ENCODE measurements at regions of chr2 and their contacts with region 1.

Region 1: DNA sequence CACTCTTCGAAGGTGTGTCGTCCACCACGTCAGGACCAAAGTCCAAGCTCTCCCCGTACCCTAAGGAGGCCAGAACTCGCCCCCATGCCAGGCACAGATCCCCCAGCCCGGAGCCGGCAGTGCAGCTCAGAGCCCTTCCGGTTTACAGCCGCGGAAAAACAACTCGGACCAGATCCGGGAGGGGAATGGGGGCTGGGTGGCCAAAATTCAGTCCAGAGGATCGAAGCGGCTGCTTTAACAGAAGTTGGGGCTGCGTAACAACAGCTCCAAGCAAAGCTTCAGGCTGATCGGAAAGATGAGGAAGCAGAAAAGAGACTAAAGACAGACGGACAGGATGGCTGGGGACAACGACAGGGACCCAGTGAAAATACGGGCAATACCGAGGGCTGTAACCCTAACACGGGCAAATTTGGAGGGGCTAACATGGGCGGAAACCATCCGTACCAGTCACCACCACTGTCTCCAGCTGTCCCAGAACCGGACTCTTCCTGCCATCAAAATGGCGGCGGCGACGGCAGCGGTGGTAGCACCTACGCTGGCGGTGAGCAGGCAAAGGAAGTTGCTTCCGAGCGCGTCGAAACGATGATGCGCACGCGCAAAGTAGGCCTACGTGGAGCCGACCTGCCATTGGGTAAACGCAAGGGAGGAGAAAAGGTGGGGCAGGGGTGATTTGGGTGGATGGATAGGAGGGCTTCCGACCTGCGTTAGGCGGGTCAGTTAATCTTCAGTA is at the start of gene MMADHC:
- DNase-seq: peak; percentile 97
- H3K4me3 ChIP-seq: peak within 1 kb of the TSS; percentile 60
- H3K4me3 Mint-ChIP-seq: peak within 1 kb of the TSS; percentile 90
- H3K27ac Mint-ChIP-seq: peak within 1 kb of the TSS; percentile 98
- H3K4me1 ChIP-seq: peaks cover 10% of the 10 kb centered on the region; the same call in 1 of the 2 replicates
- H3K4me1 Mint-ChIP-seq: peaks cover 21% of the 10 kb centered on the region
- H3K27me3 ChIP-seq: no peaks in the 10 kb centered on the region
- H3K27me3 Mint-ChIP-seq: no peaks in the 10 kb centered on the region
- CTCF ChIP-seq: no peak
- total RNA-seq, gene MMADHC: 125 and 132 TPM in 2 replicates

Region 2: DNA sequence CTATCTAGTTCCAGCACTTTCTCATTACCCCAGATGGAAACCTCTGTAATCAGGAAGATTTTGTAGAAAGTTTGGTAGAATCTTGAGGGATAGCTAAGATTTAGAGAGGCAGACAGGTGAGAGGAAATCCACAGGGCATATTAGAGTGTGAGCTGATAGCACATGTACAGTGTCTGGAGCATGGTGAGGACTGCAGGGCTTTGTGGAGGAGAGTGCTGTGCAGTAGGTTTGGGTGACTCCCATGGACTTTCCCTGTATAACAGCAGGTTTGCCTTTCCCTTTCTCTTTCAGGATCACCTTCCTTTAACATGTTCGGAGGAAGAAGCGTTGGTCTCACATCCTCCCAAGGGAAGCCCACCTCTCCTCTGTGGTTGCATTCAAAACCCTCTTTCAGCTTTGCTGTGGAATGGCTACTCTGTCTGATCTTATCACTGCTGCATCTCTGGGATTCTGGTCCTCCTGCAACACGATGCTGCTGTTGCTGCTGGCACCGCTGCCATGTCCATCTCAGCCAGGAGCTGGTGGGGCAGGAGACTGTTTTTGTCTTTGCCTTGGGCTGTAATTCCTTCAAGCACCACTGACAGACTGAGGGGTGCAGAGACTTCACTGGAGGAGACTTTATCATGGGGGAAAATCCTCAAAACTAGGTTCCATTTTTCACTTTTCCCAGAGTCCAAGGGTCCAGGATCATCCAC is 720.2 kb before region 1 on chr2:
- CTCF ChIA-PET with region 1: no interaction called
- POLR2A ChIA-PET with region 1: no interaction called
- intact Hi-C with region 1: no loop called
- DNase-seq: no peak
- H3K4me3 ChIP-seq: no peak overlapping the region
- H3K4me3 Mint-ChIP-seq: no peak overlapping the region
- H3K27ac Mint-ChIP-seq: no peak overlapping the region
- H3K4me1 ChIP-seq: no peaks in the 10 kb centered on the region
- H3K4me1 Mint-ChIP-seq: no peaks in the 10 kb centered on the region
- H3K27me3 ChIP-seq: peaks cover 1% of the 10 kb centered on the region; the same call in 1 of the 2 replicates
- H3K27me3 Mint-ChIP-seq: peaks cover 24% of the 10 kb centered on the region
- CTCF ChIP-seq: no peak

Region 3: GRCh38 chr2:149346272-149346671 is 241.1 kb before region 1 on chr2:
- CTCF ChIA-PET with region 1: no interaction called
- POLR2A ChIA-PET with region 1: no interaction called
- intact Hi-C with region 1: no loop called
- DNase-seq: no peak
- H3K4me3 ChIP-seq: no peak overlapping the region
- H3K4me3 Mint-ChIP-seq: no peak overlapping the region
- H3K27ac Mint-ChIP-seq: no peak overlapping the region
- H3K4me1 ChIP-seq: no peaks in the 10 kb centered on the region
- H3K4me1 Mint-ChIP-seq: no peaks in the 10 kb centered on the region
- H3K27me3 ChIP-seq: no peaks in the 10 kb centered on the region
- H3K27me3 Mint-ChIP-seq: no peaks in the 10 kb centered on the region
- CTCF ChIP-seq: no peak

Region 4: DNA sequence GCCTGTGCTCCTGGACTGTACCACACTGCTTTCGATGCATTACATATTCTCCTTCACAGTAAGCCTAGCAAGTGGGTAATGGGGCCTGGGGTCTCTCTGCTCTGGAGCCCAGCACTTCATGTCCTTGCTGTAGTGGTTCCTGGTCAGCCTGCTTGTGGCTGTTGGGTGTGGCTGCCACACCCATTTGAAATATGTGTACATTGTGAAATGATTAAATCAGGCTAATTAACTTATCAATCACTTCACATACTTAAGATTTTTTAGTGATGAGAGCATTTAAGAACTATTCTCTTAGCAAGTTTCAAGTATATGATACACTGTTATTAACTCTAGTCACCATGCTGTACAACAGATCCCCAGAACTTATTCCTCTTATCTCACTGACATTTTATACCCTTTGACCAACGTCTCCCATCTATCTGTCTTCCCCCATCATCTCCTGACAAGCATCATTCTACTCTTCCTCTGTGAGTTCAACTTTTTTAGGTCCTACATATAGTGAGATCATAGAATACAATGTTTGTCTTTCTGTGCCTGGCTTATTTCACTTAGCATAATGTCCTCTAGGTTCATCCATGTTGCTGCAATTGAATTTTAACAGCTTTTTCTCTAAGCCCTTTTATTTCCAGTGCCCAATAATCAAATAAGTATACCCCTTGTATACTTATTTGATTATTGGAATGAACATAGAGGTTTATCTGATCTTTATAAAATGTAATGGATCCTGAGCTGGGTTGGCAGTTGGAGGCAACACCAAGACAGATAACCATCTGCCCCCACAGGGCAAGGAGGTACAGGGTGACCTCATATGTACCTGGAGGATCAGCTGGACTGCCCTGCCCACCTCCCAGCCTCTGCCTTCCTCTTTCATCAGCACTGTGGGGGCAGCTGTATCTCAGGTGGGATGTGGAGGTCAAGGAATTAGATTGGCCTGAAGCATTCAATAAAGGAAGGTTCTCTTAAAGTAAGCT is 164.8 kb before region 1 on chr2:
- CTCF ChIA-PET with region 1: no interaction called
- POLR2A ChIA-PET with region 1: interaction called, 13 read pairs
- intact Hi-C with region 1: no loop called
- DNase-seq: peak; percentile 56 to 83
- H3K4me3 ChIP-seq: no peak overlapping the region
- H3K4me3 Mint-ChIP-seq: peak overlapping the region; percentile 2
- H3K27ac Mint-ChIP-seq: peak overlapping the region; percentile 71
- H3K4me1 ChIP-seq: peaks cover 56% of the 10 kb centered on the region
- H3K4me1 Mint-ChIP-seq: peaks cover 41% of the 10 kb centered on the region
- H3K27me3 ChIP-seq: no peaks in the 10 kb centered on the region
- H3K27me3 Mint-ChIP-seq: no peaks in the 10 kb centered on the region
- CTCF ChIP-seq: no peak

Region 5: DNA sequence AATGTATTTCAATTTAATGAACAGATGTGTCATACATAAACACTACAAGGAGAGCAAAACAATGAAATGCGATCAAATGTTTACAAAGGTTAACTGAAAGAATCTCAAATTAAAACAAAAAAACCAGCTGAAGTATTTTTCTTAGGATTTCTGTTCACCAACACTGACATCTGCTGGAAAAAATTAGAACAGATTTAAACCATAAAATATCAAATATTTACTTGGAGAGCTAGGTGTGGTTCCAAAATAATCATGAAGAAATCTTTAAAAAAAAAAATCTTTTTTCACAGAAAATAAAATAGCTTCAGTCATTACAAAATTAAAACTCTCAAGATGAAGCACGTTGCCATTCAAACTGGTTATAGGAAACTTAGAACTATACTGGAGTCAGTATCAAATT is 13.6 kb before region 1 on chr2:
- CTCF ChIA-PET with region 1: interaction called, 4 read pairs
- POLR2A ChIA-PET with region 1: interaction called, 15 read pairs
- intact Hi-C with region 1: loop called (anchors 2 kb)
- DNase-seq: no peak
- H3K4me3 ChIP-seq: no peak overlapping the region
- H3K4me3 Mint-ChIP-seq: no peak overlapping the region
- H3K27ac Mint-ChIP-seq: no peak overlapping the region
- H3K4me1 ChIP-seq: peaks cover 15% of the 10 kb centered on the region; the same call in 1 of the 2 replicates
- H3K4me1 Mint-ChIP-seq: peaks cover 14% of the 10 kb centered on the region
- H3K27me3 ChIP-seq: no peaks in the 10 kb centered on the region
- H3K27me3 Mint-ChIP-seq: no peaks in the 10 kb centered on the region
- CTCF ChIP-seq: peak; percentile 25 to 49

Measured in Caco-2 (cell line).